Activated CD4-positive, alpha-beta T cell treated with anti-CD3 and anti-CD28 coated beads, Interleukin-2, amount 10 ng/mL, durations not matched to agents 24 days and 14 days (primary cell): ENCODE measurements at regions of chr2 and their contacts with region 1.

Region 1: GRCh38 chr2:62456721-62457539 is 49.1 kb downstream of the TMEM17 start:
- DNase-seq: peak; percentile 91
- H3K4me3 Mint-ChIP-seq: peak overlapping the region; percentile 48
- H3K27ac Mint-ChIP-seq: no peak overlapping the region
- H3K4me1 Mint-ChIP-seq: no peaks in the 10 kb centered on the region
- H3K27me3 Mint-ChIP-seq: peaks cover 11% of the 10 kb centered on the region

Region 2: DNA sequence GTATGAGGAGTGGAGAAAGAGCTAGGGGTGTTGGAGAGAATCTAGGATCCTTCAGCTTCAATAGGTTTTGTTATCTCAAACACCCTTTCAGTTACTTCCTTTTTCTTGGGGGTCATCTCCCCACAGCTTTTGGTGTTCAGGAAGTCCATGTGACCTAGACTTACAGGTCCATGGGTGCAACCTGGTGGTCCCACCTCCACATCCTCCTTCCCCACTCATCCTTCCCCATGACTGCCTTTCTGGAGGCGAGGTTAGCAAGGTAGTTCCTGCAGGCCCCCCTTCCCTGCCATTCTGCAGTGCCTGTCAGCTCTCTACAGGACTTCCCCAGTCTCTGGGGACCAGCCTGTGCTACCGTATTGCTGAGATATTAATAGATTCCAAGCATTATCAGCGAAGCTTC is 58.6 kb before region 1 on chr2:
- intact Hi-C with region 1: no loop called
- DNase-seq: no peak
- H3K4me3 Mint-ChIP-seq: no peak overlapping the region
- H3K27ac Mint-ChIP-seq: no peak overlapping the region
- H3K4me1 Mint-ChIP-seq: no peaks in the 10 kb centered on the region
- H3K27me3 Mint-ChIP-seq: peaks cover 15% of the 10 kb centered on the region

Region 3: GRCh38 chr2:62774555-62775366 is 317.8 kb after region 1 on chr2:
- intact Hi-C with region 1: loop called (anchors 1 kb)
- DNase-seq: peak; percentile 68
- H3K4me3 Mint-ChIP-seq: no peak overlapping the region
- H3K27ac Mint-ChIP-seq: no peak overlapping the region
- H3K4me1 Mint-ChIP-seq: peaks cover 2% of the 10 kb centered on the region
- H3K27me3 Mint-ChIP-seq: no peaks in the 10 kb centered on the region

Region 4: GRCh38 chr2:63424329-63425078 is 967.6 kb after region 1 on chr2:
- intact Hi-C with region 1: loop called (anchors 2 kb)
- DNase-seq: peak; percentile 80
- H3K4me3 Mint-ChIP-seq: no peak overlapping the region
- H3K27ac Mint-ChIP-seq: no peak overlapping the region
- H3K4me1 Mint-ChIP-seq: peaks cover 2% of the 10 kb centered on the region
- H3K27me3 Mint-ChIP-seq: no peaks in the 10 kb centered on the region